ENCODE measurements at regions of chr16 and their contacts with region 1.

Region 1: DNA sequence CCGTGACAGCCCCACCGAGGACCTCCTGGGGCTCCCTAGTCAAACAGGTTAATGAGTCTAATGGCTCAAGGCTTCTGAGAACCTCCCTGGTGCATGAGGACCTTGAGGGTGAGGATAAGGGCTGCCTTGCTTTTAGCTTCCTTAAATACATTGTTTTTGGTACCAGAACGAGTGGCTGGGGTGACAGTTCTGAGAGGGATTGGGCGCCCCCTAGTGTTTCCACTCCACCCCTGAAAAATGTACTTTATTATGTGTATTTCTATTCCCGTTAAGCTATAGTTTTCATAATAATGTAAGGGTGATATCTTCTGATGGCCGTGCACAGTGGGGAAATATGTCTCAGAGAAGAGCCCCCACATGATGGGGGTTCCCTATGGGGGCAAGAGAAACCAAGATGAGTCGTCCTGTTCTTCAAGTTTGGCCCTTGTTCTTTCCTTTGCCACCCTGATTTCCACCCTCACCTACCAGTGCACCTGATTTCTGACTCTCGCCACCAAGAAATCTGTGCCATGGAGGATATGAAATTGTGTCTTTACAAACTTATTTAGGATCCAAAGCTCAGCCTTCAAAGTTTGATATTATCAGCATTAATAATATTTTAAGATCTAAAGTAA is 14.5 kb upstream of the VWA3A start:
- DNase-seq: peak; percentile 67
- CTCF ChIP-seq: peak; percentile 66

Region 2: DNA sequence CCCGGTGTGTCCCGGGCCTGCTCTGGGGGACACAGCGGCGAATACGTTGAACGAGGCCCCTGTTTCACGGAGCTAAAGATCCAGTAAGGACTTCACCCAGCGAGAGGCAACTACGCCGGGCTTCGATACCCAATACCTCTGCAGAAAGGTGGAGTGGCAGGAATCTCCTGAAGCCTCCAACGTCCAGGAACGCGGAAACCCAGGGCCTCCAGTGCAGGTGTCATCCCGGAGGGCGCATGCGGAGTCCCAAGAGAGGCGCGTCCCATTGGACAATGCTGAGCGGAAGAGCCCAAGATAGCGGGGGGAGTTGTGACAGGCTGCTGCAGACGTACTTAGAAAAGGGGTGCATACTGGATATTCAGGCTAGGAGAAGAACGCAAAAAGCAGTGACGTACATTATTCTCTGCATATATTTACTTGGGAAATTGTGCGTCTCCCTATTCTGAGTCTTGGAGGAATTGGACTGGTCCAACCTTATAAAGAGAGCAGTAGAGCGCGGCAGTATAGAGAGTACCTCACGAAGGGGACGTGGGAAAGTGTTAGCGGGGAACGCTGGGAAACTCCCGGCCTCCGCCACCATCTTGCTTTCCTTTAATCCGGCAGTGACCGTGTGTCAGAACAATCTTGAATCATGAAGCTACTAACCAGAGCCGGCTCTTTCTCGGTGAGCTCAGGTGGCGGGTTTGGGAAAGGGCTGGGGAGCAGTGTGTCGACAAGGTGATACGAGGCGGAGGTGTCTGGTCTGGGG is 124.8 kb before region 1 on chr16 and contains the start of gene UQCRC2:
- CTCF ChIA-PET with region 1: interaction called, 21 read pairs
- POLR2A ChIA-PET with region 1: no interaction called
- DNase-seq: peak; percentile 90
- CTCF ChIP-seq: no peak

Region 3: DNA sequence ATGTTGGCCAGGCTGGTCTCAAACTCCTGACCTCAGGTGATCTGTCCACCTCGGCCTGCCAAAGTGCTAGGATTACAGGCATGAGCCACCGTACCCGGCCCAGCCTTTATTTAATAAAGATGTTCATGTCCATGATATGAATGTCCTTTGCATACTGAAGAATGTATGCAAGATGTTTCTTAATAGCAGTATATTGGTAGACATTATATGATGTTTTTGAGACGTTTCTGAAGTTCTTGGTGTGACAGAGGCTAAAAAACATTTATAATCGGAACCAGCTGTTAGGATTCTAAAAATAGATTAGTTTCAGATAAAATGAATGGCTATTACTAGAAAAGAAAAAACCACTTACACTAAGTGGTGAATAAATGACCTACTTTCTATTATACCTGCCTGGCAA is 88.7 kb before region 1 on chr16:
- CTCF ChIA-PET with region 1: interaction called, 71 read pairs
- POLR2A ChIA-PET with region 1: no interaction called
- DNase-seq: no peak
- CTCF ChIP-seq: no peak

Region 4: DNA sequence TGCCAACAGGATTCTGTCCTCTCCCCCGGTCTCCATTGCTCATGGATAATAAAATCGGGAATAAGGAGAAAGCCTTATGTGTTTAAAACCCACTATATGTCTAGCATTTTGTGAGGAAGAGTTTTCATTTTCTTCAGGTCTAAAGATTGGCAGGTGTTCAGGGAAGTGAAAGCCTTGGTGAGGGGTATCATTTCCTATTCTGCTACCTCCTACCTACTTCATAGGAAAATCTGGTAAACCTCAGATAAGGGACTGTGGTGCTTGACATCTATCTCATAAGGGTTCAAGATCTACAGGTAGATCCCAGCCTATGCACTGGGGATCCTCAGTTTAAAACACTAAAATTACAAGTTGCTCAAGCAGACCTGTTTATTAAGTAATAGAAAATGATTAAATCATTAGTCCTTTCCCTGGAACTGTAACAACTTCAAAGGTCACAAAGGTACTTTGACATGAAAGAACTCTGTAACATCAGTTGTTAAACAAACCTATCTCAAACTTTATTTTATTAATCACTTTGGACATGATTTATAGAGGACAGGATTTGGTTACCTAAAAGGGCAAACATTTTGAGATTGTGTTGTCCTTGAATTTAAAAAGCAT is 63.4 kb before region 1 on chr16:
- CTCF ChIA-PET with region 1: interaction called, 313 read pairs
- POLR2A ChIA-PET with region 1: no interaction called
- DNase-seq: peak; percentile 35
- CTCF ChIP-seq: no peak

Region 5: GRCh38 chr16:22055878-22056277 is 21.9 kb before region 1 on chr16:
- CTCF ChIA-PET with region 1: interaction called, 53 read pairs
- POLR2A ChIA-PET with region 1: no interaction called
- DNase-seq: no peak
- CTCF ChIP-seq: no peak

Region 6: GRCh38 chr16:22098405-22099255 is 20.8 kb after region 1 on chr16:
- CTCF ChIA-PET with region 1: interaction called, 47 read pairs
- POLR2A ChIA-PET with region 1: no interaction called
- DNase-seq: peak; percentile 71
- CTCF ChIP-seq: peak; percentile 61

Region 7: DNA sequence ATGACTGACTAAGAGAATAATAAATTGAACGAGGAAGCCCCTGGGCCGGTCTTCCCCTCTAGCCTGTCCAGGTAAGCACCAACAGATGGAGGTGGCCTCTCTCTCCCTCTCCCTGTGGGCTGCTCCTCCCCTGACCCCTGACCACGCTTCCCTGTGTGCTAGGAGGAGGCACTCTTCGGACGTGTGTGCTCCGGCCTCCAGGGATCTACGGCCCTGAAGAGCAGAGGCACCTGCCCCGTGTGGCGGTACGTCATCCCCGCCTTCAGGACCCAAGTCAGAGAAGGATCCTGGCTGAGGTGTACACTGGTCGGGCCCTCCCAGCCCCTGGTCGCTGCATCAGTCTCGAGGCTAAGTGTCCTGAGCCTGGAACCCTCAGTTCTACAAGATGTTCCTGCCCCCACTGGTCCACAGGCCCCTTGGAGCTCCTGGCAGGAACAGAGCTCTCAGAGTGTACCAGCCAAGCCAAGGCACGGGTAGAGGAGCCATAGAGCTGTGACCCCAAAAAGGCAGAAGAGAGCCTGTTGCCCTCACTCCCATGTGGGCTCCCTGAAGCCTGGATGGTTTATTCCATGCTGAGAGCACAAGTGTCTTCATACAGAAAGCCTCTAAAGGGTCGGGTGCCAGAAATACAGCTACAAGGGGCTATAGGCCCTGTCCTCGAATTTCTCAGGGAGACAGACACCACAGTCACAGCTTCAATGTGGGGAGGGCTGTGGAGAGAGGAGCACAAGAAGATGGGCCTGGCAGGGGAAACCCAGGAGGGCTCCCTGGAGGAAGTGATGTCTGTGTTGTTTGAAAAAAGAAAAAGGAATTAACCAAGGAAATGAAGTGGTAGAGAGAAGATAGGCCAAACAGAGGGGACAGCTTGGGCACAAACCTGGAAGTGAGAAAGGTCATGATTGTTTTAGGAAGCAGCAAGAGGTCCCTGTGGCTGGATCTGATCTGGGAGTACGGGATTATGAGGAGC is 100.4 kb after region 1 on chr16:
- CTCF ChIA-PET with region 1: no interaction called
- POLR2A ChIA-PET with region 1: no interaction called
- DNase-seq: no peak
- CTCF ChIP-seq: no peak

Region 8: DNA sequence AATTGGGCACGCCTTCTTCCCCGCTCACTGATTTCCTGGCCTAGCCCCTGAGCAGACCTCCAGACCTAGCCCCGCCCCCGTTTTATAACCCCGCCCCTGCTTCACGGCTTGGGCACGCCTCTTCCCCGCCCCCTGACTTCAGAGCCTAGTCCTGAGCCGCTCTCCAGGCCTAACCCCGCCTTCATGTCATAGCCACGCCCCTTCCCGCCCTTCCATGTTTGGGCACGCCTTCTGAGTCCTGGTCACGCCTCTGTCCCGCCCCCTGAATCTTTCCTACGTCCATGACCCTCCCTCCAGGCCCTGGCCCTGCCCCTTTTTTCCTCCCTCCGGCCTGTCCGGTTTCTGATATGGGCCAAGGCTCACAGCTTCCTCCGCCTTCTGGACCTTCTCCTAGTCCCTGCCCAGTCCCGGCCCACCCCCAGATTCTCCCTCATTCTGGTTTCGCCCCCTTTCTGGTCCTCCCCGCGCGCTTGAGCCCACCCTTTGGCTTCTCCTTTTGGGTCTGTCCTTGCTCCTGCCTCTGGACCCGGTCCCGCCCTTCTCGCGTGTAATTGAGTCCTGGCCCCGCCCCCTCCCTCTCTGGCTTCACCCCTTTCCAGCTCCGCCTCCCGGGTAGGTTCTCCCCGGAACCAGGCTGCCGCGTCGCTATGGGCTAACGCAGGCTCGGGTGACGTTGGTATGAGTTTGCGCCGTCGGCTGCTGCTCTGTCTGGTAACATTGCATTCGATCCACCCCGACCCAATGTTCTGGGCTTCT is 113.1 kb after region 1 on chr16:
- CTCF ChIA-PET with region 1: interaction called, 24 read pairs
- POLR2A ChIA-PET with region 1: no interaction called
- DNase-seq: peak; percentile 95
- CTCF ChIP-seq: no peak

Region 9: GRCh38 chr16:22278441-22279236 is 200.8 kb after region 1 on chr16:
- CTCF ChIA-PET with region 1: no interaction called
- POLR2A ChIA-PET with region 1: no interaction called
- DNase-seq: no peak
- CTCF ChIP-seq: no peak

Measured in GM10248 (cell line).